ENCODE measurements at regions of chrX and their contacts with region 1.

Region 1: DNA sequence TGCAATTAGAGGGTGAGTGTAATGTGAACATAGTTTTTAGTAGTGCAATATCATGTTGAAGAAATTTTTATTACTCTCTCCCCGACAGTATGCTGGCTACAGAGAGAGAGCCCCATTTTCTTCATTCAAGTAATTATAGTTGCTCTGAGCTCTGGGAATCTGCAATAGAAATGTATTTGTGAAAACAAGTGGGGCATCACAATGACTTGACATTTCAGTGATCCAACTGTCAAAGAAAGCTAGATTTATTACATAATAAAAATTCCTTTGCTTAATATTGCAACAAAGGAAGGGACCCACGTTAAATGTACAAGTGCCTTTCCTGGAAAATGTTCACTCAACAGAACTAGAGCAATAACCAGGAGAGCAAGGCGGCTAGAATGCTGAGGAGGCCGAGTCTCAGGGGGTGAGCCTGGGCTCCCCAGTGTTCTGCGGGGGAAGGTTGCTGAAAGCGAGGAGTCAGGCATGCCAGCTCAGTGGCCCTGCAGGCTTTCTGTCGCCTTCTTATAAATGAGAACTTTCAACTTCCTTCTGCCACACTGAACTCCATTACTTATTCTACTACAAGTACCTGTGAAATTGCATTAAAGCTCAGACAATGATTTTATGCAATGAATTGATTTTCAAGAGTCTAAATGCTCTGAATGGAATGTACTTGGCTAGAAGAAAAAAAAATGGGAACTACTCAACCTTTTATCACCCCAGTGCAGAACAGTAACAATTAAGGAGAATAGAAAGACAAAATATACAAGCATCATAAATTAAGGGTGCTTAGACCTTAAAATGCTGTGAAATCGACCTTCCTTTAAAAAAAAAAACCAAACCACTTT is 476.4 kb downstream of the AFF2 start:
- DNase-seq: no peak
- ATAC-seq: no peak
- H3K4me3 ChIP-seq: no peak overlapping the region
- H3K27ac ChIP-seq: no peak overlapping the region
- H3K4me1 ChIP-seq: no peaks in the 10 kb centered on the region
- H3K27me3 ChIP-seq: no peaks in the 10 kb centered on the region
- CTCF ChIP-seq: no peak
- EP300 ChIP-seq: no peak
- POLR2A ChIP-seq: no peak
- RAD21 ChIP-seq: no peak

Region 2: DNA sequence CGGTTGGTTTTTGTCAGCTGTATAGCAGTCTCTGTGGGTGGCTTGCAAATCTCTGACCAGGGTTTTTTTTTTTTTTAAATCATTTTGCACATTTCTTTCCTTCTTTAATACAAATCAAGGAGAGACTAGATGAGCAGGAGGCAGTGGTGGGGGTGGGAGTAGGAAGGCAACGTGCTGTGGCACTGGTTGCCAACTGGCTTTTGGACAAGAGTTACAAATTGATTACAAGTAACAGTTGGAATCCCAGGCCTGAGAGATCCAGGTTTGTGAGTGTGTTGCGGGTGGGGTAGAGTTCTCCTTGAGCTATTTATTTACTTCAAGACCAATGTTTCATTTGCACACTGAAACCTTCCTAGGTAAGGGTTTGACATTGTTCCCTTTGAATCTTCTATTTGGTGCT is 151.1 kb before region 1 on chrX:
- CTCF ChIA-PET with region 1: no interaction called
- POLR2A ChIA-PET with region 1: no interaction called
- RAD21 ChIA-PET with region 1: no interaction called
- SMC1A ChIA-PET with region 1: no interaction called
- in situ Hi-C with region 1: no loop called
- intact Hi-C with region 1: no loop called
- DNase-seq: no peak
- ATAC-seq: no peak
- H3K4me3 ChIP-seq: no peak overlapping the region
- H3K27ac ChIP-seq: no peak overlapping the region
- H3K4me1 ChIP-seq: no peaks in the 10 kb centered on the region
- H3K27me3 ChIP-seq: no peaks in the 10 kb centered on the region
- CTCF ChIP-seq: no peak
- EP300 ChIP-seq: no peak
- POLR2A ChIP-seq: no peak
- RAD21 ChIP-seq: no peak

Region 3: DNA sequence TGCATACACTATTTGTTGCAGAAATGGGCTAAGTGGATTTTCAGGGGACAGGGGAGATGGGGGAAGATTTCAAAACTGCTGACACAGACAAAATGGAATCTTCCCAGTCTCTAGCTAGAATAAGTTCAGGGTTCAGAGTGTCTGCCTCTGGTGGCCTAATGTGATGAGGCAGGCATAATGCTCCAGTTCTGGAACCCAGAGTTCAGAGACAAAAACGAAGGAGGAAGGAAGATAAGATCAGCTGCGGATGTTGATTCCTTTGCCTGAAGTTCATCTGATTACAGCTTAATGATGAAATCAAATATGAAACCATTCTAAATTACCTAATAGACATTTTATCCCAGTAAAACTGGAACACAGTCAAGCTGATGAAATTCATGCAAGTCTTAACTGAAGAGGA is 29.3 kb before region 1 on chrX:
- CTCF ChIA-PET with region 1: no interaction called
- POLR2A ChIA-PET with region 1: no interaction called
- RAD21 ChIA-PET with region 1: no interaction called
- SMC1A ChIA-PET with region 1: no interaction called
- in situ Hi-C with region 1: no loop called
- intact Hi-C with region 1: no loop called
- DNase-seq: no peak
- ATAC-seq: no peak
- H3K4me3 ChIP-seq: no peak overlapping the region
- H3K27ac ChIP-seq: no peak overlapping the region
- H3K4me1 ChIP-seq: no peaks in the 10 kb centered on the region
- H3K27me3 ChIP-seq: no peaks in the 10 kb centered on the region
- CTCF ChIP-seq: no peak
- EP300 ChIP-seq: no peak
- POLR2A ChIP-seq: no peak
- RAD21 ChIP-seq: no peak

Region 4: GRCh38 chrX:148995661-148996060 is 18.9 kb after region 1 on chrX:
- CTCF ChIA-PET with region 1: interaction called, 3 read pairs
- POLR2A ChIA-PET with region 1: no interaction called
- RAD21 ChIA-PET with region 1: interaction called, 5 read pairs
- SMC1A ChIA-PET with region 1: interaction called, 10 read pairs
- in situ Hi-C with region 1: no loop called
- intact Hi-C with region 1: no loop called
- DNase-seq: no peak
- ATAC-seq: no peak
- H3K4me3 ChIP-seq: no peak overlapping the region
- H3K27ac ChIP-seq: no peak overlapping the region
- H3K4me1 ChIP-seq: no peaks in the 10 kb centered on the region
- H3K27me3 ChIP-seq: no peaks in the 10 kb centered on the region
- CTCF ChIP-seq: no peak
- EP300 ChIP-seq: no peak
- POLR2A ChIP-seq: no peak
- RAD21 ChIP-seq: no peak